ENCODE measurements at regions of chr6 and their contacts with region 1.

Region 1: GRCh38 chr6:157379656-157380454 is 1.1 kb upstream of the ZDHHC14 start:
- DNase-seq: peak; percentile 79 to 92
- ATAC-seq: peak; percentile 75 to 84 (median 76)
- H3K4me3 ChIP-seq: peak overlapping the region; percentile 86
- H3K4me3 Mint-ChIP-seq: peak overlapping the region; percentile 87
- H3K27ac ChIP-seq: peak overlapping the region; percentile 73
- H3K27ac Mint-ChIP-seq: peak overlapping the region; percentile 60 to 72
- H3K4me1 ChIP-seq: peaks cover 12% of the 10 kb centered on the region
- H3K4me1 Mint-ChIP-seq: peaks cover 30% of the 10 kb centered on the region in 2 donors
- H3K27me3 ChIP-seq: no peaks in the 10 kb centered on the region
- H3K27me3 Mint-ChIP-seq: no peaks in the 10 kb centered on the region
- CTCF ChIP-seq: no peak

Region 2: GRCh38 chr6:157323255-157323965 is 56.4 kb before region 1 on chr6 and contains the start of gene TMEM242:
- intact Hi-C with region 1: loop called (anchors 1 kb)
- DNase-seq: peak; percentile 87 to 91
- ATAC-seq: peak; percentile 96 to 99 (median 97)
- H3K4me3 ChIP-seq: peak within 1 kb of the TSS; percentile 81
- H3K4me3 Mint-ChIP-seq: peak within 1 kb of the TSS; percentile 98
- H3K27ac ChIP-seq: peak within 1 kb of the TSS; percentile 72
- H3K27ac Mint-ChIP-seq: peak within 1 kb of the TSS; percentile 88 to 89
- H3K4me1 ChIP-seq: peaks cover 13% of the 10 kb centered on the region
- H3K4me1 Mint-ChIP-seq: peaks cover 19 to 20% of the 10 kb centered on the region in 2 donors
- H3K27me3 ChIP-seq: no peaks in the 10 kb centered on the region
- H3K27me3 Mint-ChIP-seq: peaks cover 3 to 15% of the 10 kb centered on the region in 2 donors
- CTCF ChIP-seq: no peak
- total RNA-seq, gene TMEM242: 18.5 to 24.8 (median 19.8) TPM

Region 3: GRCh38 chr6:157461000-157461915 is 81.4 kb after region 1 on chr6:
- intact Hi-C with region 1: loop called (anchors 5 kb)
- DNase-seq: peak; percentile 46 to 65
- ATAC-seq: peak; percentile 84 to 95 (median 84)
- H3K4me3 ChIP-seq: no peak overlapping the region
- H3K4me3 Mint-ChIP-seq: peak overlapping the region; percentile 18
- H3K27ac ChIP-seq: no peak overlapping the region
- H3K27ac Mint-ChIP-seq: peak overlapping the region; percentile 33 to 49
- H3K4me1 ChIP-seq: peaks cover 41% of the 10 kb centered on the region
- H3K4me1 Mint-ChIP-seq: peaks cover 15 to 25% of the 10 kb centered on the region in 2 donors
- H3K27me3 ChIP-seq: no peaks in the 10 kb centered on the region
- H3K27me3 Mint-ChIP-seq: peaks cover 0 to 2% of the 10 kb centered on the region in 2 donors
- CTCF ChIP-seq: peak; percentile 19